ENCODE measurements at regions of chr6 and their contacts with region 1.

Region 1: DNA sequence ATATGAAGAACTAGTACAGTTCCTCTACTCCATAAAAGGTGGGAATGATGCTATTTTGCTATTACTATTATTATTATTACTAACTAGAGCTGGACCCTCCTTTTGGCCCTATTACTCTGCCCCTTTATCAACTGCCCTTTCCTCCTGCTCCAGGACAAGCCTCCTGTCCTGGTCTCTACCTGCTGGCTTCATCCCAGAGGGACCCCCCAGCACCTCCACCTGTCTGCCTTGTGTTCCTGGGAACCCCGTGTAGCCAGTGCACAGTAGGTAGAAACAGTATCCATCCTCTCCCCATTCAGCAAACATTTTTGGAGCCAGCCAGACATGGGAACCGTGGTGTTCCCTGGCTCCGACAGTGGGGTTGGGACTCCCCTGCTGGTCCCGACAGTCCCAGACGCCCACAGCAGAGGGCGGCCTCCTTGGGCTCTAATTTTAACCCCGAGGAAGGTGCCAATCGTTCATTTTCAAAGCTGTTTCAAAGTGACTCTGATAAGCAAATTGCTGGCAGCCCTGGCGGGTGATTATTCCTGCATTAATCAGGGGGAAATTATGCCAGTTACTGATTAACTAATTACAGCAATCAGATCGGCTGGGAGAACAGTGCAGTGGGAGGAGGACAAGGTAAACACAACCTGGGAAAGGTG is 44.2 kb upstream of the MDGA1 start:
- DNase-seq: no peak
- H3K4me3 ChIP-seq: no peak overlapping the region
- H3K27ac ChIP-seq: no peak overlapping the region
- H3K4me1 ChIP-seq: no peaks in the 10 kb centered on the region
- H3K27me3 ChIP-seq: peaks cover 0 to 12% of the 10 kb centered on the region in 2 donors
- CTCF ChIP-seq: no peak

Region 2: GRCh38 chr6:38209371-38210260 is 467.7 kb after region 1 on chr6:
- intact Hi-C with region 1: loop called (anchors 10 kb)
- DNase-seq: no peak
- H3K4me3 ChIP-seq: no peak overlapping the region
- H3K27ac ChIP-seq: no peak overlapping the region
- H3K4me1 ChIP-seq: peaks cover 0 to 33% (median 30%) of the 10 kb centered on the region in 4 donors
- H3K27me3 ChIP-seq: no peaks in the 10 kb centered on the region
- CTCF ChIP-seq: no peak

Measured in tibial artery (tissue), 4 donors.